BJ (cell line): ENCODE measurements at regions of chr11 and their contacts with region 1.

Region 1: GRCh38 chr11:46238967-46239800 is 38.3 kb upstream of the CREB3L1 start:
- DNase-seq: no peak
- H3K4me3 ChIP-seq: peak overlapping the region; percentile 32
- H3K27me3 ChIP-seq: no peaks in the 10 kb centered on the region
- CTCF ChIP-seq: peak; percentile 81

Region 2: GRCh38 chr11:45859661-45860140 is 379.5 kb before region 1 on chr11:
- CTCF ChIA-PET with region 1: no interaction called
- POLR2A ChIA-PET with region 1: no interaction called
- DNase-seq: peak; percentile 98
- H3K4me3 ChIP-seq: no peak overlapping the region
- H3K27me3 ChIP-seq: no peaks in the 10 kb centered on the region
- CTCF ChIP-seq: no peak

Region 3: GRCh38 chr11:46009647-46010046 is 229.5 kb before region 1 on chr11:
- CTCF ChIA-PET with region 1: no interaction called
- POLR2A ChIA-PET with region 1: no interaction called
- DNase-seq: no peak
- H3K4me3 ChIP-seq: no peak overlapping the region
- H3K27me3 ChIP-seq: no peaks in the 10 kb centered on the region
- CTCF ChIP-seq: no peak

Region 4: DNA sequence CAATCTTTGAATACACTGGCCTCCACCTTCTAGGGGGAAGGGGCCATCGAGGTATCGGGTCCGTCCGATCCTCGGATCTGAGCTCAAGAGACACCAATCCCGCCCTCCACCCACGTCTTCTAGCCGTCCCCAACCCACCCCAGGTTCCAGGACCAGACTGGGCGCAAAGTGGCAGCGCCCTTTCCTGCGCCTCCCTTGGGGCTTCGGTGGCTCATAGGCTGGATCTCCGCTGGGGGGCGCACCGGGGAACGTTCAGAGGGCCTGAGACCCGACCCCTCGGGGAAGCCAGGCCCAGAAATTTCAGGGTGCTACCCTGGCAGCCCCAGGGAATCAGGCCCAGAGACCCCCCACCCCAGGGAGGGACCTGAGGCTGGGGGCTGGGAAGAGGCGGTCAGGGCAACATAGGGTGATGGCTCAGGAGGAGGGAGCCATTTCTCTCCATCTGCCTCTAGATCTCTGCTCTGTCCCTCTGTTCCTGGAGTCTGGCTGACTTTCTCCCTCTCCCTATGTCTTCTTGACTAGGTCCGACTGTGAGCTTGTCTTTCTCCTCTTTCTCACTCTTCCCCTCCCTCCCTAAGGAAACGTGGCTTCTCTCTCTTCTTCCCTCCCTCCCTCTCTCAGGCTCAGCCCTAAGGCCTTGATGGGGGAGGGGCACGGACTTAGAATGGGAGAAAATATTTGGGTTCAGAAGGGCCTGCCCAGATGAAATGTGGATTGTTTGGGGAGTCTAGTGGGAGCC is 39.4 kb after region 1 on chr11:
- CTCF ChIA-PET with region 1: interaction called, 120 read pairs
- POLR2A ChIA-PET with region 1: interaction called, 13 read pairs
- DNase-seq: no peak
- H3K4me3 ChIP-seq: peak overlapping the region; percentile 81
- H3K27me3 ChIP-seq: no peaks in the 10 kb centered on the region
- CTCF ChIP-seq: peak; percentile 90

Region 5: DNA sequence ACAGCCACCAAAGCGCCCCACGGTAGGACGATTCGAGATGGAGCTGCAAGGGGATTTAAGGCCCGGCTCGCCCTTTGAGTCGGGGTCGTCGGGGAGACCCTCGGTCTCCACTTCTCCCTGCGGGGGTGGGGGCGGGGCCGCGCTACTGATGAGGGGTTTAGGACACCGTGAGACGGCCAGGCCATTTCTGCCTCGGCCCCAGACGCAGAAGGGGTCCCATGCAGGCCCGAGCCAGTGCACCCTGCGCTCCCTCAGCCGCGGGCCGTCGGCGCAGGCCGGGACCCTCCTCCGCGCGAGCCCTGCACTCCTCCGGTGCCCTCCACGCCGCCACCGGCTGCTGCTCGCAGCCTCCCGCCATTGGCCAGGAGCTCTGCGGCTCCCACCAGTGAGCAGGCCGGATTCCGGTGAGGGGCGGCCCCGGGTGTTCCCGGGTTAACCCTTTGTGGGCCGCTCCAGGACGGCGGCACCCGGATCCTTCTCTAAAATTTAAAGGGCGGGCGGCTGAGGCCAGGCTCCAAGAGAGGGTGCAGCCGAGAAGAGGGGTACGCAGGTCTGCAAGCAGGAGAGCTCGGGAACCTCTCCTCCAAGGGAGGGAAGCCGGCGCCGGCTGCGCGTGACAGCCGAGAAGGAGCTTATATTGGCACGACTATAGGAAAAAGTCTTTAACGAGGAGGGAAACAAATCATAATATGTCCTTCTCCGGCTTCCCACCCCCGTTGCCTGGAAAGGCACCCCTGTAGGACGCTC is 56.3 kb after region 1 on chr11:
- CTCF ChIA-PET with region 1: interaction called, 115 read pairs
- POLR2A ChIA-PET with region 1: interaction called, 5 read pairs
- DNase-seq: no peak
- H3K4me3 ChIP-seq: peak overlapping the region; percentile 51
- H3K27me3 ChIP-seq: no peaks in the 10 kb centered on the region
- CTCF ChIP-seq: no peak

Region 6: DNA sequence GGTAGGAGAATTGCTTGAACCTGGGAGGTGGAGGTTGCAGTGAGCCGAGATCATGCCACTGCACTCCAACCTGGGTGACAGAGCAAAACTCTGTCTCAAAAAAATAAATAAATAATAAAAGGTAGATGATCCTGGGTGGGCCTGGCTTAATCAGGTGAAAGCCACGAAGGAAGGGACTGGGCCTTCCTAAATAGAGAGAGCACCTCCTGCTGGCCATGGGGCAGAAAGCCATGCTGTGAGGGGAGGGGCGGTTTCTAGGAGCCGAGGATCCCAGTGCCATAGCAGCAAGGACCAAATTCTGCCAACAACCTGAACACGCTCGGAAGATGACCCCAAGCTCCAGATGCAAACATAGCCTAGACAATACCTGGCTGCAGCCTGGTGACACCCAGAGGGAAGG is 83.6 kb after region 1 on chr11:
- CTCF ChIA-PET with region 1: interaction called, 341 read pairs
- POLR2A ChIA-PET with region 1: interaction called, 6 read pairs
- DNase-seq: no peak
- H3K4me3 ChIP-seq: no peak overlapping the region
- H3K27me3 ChIP-seq: no peaks in the 10 kb centered on the region
- CTCF ChIP-seq: peak; percentile 64

Region 7: GRCh38 chr11:46367244-46367915 is 128.2 kb after region 1 on chr11:
- CTCF ChIA-PET with region 1: interaction called, 19 read pairs
- POLR2A ChIA-PET with region 1: no interaction called
- DNase-seq: no peak
- H3K4me3 ChIP-seq: no peak overlapping the region
- H3K27me3 ChIP-seq: no peaks in the 10 kb centered on the region
- CTCF ChIP-seq: peak; percentile 90